ENCODE measurements at regions of chr12 and their contacts with region 1.

Region 1: DNA sequence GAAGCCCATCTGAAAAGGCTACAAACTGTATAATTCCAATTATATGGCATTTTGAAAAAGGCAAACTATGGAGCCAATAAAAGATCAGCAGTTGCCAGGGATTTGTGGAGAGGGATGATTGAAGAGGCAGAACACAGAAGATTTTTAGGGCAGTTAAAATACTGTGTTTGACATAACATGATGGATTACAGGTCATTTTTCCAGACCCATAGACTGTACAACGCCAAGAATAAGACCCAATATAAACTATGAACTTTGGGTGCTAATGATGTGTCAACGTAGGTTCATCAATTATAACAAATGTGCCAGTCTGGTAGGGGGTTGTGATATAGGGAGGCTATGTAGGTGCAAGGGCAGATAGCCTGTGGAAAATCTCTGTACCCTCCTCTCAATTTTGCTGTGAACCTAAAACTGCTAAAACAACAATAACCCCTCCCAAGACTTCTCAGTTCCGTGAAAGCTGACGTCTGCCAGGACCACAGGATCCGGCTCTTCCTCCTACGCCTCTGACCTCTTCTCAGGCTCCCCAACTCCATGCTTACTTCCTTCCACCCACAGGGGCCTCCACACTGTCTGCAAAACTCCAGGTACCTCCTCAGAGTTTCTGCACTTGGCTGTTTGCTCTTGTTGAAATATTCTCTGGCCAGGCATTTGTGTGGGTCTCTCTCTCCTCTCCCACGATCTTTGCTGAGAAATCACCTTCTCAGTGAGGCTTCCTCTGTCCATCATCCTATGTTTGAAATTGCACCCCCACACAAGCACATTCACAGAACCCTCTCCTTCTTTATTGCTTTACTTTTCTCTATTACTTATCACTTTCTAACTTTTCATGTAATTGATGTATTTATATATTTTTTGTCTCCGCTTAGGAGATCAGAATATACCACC is 131.4 kb downstream of the BBS10 start:
- DNase-seq: no peak
- H3K4me3 ChIP-seq: no peak overlapping the region
- H3K27ac ChIP-seq: no peak overlapping the region
- H3K4me1 ChIP-seq: no peaks in the 10 kb centered on the region
- H3K27me3 ChIP-seq: no peaks in the 10 kb centered on the region
- CTCF ChIP-seq: no peak
- POLR2A ChIP-seq: no peak

Region 2: GRCh38 chr12:76137606-76138005 is 79.2 kb before region 1 on chr12:
- intact Hi-C with region 1: loop called (anchors 2 kb)
- DNase-seq: no peak
- H3K4me3 ChIP-seq: no peak overlapping the region
- H3K27ac ChIP-seq: no peak overlapping the region
- H3K4me1 ChIP-seq: no peaks in the 10 kb centered on the region
- H3K27me3 ChIP-seq: no peaks in the 10 kb centered on the region
- CTCF ChIP-seq: no peak
- POLR2A ChIP-seq: no peak

Measured in breast epithelium (tissue), 4 donors.